ENCODE measurements at regions of chrX and their contacts with region 1.

Region 1: GRCh38 chrX:65677954-65678469 is 10.6 kb downstream of the MSN start:
- DNase-seq: peak in 3 of 5 donors; percentile 50 to 74 (median 53)
- ATAC-seq: peak in 3 of 4 donors; percentile 48 to 74 (median 53)
- H3K4me3 ChIP-seq: peak overlapping the region in 4 of 12 donors; percentile 5 to 28 (median 22)
- H3K27ac ChIP-seq: peak overlapping the region; percentile 61 to 100 (median 84)
- H3K4me1 ChIP-seq: peaks cover 0 to 100% (median 83%) of the 10 kb centered on the region in 12 donors
- H3K27me3 ChIP-seq: peaks cover 0 to 3% (median 0%) of the 10 kb centered on the region in 9 donors
- CTCF ChIP-seq: no peak
- POLR2A ChIP-seq: no peak

Region 2: GRCh38 chrX:65697915-65698796 is 20.1 kb after region 1 on chrX:
- intact Hi-C with region 1: loop called in 1 of 10 experiments (anchors 2 kb)
- DNase-seq: peak; percentile 61 to 79 (median 71)
- ATAC-seq: peak; percentile 59 to 83 (median 70)
- H3K4me3 ChIP-seq: peak overlapping the region in 3 of 12 donors; percentile 6 to 28 (median 12)
- H3K27ac ChIP-seq: peak overlapping the region; percentile 7 to 93 (median 78)
- H3K4me1 ChIP-seq: peaks cover 0 to 98% (median 76%) of the 10 kb centered on the region in 12 donors
- H3K27me3 ChIP-seq: no peaks in the 10 kb centered on the region
- CTCF ChIP-seq: no peak
- POLR2A ChIP-seq: no peak

Region 3: DNA sequence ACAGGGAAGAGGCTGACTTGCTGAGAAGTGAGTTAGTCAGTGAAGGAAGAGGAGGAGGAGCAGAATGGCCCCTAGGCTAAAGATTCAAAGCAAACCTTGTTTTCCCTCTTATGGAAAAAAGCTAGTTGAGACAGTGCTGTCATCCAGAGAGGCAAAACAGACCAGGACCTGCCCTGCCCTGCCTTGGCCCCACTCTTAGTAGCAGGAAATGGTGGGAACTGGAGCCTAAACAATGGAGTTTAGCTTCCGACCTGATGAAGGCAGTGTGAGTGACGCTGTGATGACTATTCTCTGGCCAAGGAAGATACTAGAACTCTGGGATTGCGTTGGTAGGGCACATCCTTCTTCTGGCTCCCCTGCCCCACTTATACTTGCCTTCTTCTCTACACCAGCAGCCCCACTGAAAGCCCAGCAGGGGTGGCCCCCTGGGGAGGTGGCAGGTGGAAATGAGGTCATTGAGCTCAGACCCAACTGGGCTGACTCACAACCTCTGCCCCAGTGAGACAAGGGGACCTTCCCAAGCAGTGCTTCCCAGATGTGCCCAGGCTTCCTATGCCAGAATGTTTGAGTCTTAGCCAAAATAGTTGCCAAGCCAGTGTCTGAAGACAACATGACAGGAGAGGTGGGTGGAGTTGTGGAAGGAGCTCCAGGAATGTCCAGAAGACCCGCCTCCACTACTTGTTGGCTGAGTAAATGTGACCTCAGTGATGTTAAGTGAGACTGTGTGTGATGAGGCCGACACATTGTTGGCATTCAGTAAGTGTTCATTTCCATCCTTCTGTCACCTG is 28.2 kb after region 1 on chrX:
- intact Hi-C with region 1: loop called in 3 of 10 experiments (anchors 2 to 5 kb)
- DNase-seq: peak; percentile 45 to 79 (median 61)
- ATAC-seq: peak; percentile 84 to 92 (median 86)
- H3K4me3 ChIP-seq: no peak overlapping the region
- H3K27ac ChIP-seq: peak overlapping the region; percentile 61 to 85 (median 78)
- H3K4me1 ChIP-seq: peaks cover 0 to 82% (median 50%) of the 10 kb centered on the region in 12 donors
- H3K27me3 ChIP-seq: no peaks in the 10 kb centered on the region
- CTCF ChIP-seq: no peak
- POLR2A ChIP-seq: no peak